ENCODE measurements at regions of chr3 and their contacts with region 1.

Region 1: DNA sequence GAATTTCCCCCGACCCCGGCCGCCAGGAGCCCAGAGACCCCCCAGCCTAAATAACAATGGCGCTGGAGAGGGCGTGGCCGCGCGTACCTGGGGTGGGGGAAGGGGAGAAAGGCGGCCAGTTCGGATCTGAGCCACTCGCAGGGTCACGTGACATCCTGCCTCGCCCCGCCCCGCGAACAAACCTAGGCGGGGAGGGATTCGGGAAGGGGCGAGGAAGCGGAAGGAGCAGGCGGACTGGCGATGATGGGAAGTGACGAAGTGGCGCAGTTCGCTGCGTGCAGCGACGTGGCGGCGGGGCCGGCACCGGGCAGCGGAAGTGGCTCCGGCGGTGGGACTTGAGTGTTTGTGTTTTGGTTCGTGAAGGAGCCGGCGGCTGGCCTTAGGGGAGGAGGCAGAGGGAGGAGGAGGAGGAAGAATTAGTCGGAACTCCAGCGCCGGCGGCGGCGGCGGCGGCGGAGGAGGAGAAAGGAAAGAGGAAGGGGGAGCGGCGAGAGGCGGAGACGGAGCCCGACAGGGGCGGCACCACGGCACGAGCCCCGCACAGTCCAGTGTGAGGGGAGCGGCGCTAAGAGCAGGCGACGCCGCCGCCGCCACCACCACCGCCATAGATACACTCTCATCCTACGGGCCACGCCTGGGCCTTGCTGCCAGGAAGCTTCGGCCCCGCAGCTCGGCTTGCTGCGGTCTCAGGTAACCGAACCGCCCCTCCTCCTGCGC is at the start of gene RAB5A:
- DNase-seq: peak; percentile 94
- ATAC-seq: peak; percentile 94
- H3K4me3 ChIP-seq: peak within 1 kb of the TSS; percentile 73 to 98 (median 90)
- H3K27ac ChIP-seq: peak within 1 kb of the TSS; percentile 88
- H3K4me1 ChIP-seq: peaks cover 29% of the 10 kb centered on the region
- H3K27me3 ChIP-seq: no peaks in the 10 kb centered on the region; a peak in 1 of 5 replicates
- CTCF ChIP-seq: no peak
- EP300 ChIP-seq: 0 out of 4 replicates have a peak, but pooled peaks have one; percentile 27 to 35
- POLR2A ChIP-seq: peak; percentile 59 to 91
- RAD21 ChIP-seq: peak; percentile 8; the same call in 1 of the 2 replicates
- total RNA-seq, gene RAB5A: 27.1 and 29.3 TPM in 2 replicates

Region 2: DNA sequence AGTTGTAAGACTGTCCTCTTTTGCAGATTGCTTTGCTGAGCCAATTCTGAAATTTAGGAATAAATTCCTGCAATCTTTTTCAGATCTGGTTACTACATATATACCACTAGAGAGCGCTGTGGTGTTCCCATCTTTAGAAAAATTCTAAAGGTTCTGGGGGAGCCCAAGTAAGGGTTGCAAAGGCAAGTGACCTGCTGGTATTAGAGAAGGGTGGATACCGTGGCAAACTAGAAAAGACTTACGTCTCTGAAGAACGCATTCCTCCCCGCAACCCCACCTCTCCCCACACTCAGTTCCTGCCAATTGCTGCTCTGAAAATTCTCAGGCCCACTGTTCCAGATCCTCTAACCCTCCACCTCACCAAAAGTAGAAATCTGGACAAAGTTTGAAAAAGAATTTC is 61.5 kb before region 1 on chr3:
- CTCF ChIA-PET with region 1: no interaction called
- POLR2A ChIA-PET with region 1: no interaction called
- in situ Hi-C with region 1: no loop called
- intact Hi-C with region 1: loop called (anchors 2 kb)
- DNase-seq: peak; percentile 30
- ATAC-seq: peak; percentile 67
- H3K4me3 ChIP-seq: no peak overlapping the region
- H3K27ac ChIP-seq: no peak overlapping the region
- H3K4me1 ChIP-seq: peaks cover 15% of the 10 kb centered on the region; the same call in 1 of the 2 replicates
- H3K27me3 ChIP-seq: no peaks in the 10 kb centered on the region
- CTCF ChIP-seq: peak; percentile 56
- EP300 ChIP-seq: no peak
- POLR2A ChIP-seq: no peak
- RAD21 ChIP-seq: no peak

Region 3: DNA sequence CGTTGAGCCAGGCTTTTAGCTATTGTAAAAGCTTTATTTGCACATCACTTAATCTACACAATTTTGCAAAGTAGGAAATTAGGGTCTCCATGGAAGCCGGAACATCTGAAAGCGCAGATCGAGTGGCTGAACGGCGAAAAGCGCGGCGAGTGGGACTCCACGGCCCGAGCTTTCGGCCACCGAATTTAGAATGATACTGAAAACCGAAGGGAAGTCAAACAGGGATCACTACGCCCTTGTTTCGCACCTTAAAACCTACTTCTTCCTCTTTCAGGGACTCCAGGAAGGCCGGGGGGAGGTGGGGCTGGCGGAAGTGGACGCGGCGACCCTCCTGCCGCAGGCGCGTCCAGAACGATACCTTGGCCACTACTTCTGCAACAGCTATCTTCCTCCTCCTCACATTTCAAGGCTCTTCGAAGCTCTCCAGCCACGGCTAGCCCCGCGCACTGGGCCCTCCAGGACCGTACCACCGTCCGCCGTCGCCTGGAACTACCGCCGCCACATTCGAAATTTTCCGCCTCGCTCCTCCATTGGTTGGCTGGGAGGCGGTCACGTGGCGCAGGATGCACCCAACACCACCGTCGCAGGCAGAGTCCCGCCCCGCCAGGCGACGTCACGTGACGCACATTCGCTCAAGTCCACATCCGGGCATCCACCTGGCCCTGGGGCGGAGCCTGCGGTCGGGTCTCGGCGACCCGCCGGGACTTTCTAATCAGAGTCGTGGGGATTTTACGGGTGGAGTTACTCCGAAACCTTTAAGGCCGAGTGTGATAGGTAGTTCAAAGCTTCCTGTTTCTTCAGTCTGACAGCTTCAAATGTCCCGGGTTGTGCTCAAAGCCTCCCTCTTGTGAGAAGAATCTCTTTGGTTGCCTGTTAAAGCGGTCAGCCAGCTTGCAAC is 239.0 kb after region 1 on chr3 and contains the start of gene SGO1:
- CTCF ChIA-PET with region 1: no interaction called
- POLR2A ChIA-PET with region 1: no interaction called
- in situ Hi-C with region 1: no loop called
- intact Hi-C with region 1: loop called (anchors 10 kb)
- DNase-seq: peak; percentile 94
- ATAC-seq: peak; percentile 98
- H3K4me3 ChIP-seq: peak within 1 kb of the TSS; percentile 91 to 99 (median 93)
- H3K27ac ChIP-seq: peak within 1 kb of the TSS; percentile 91
- H3K4me1 ChIP-seq: peaks cover 21% of the 10 kb centered on the region
- H3K27me3 ChIP-seq: no peaks in the 10 kb centered on the region; a peak in 1 of 5 replicates
- CTCF ChIP-seq: 0 out of 2 replicates have a peak, but pooled peaks have one; percentile 6
- EP300 ChIP-seq: no peak
- POLR2A ChIP-seq: peak; percentile 77 to 88
- RAD21 ChIP-seq: no peak
- total RNA-seq, gene SGO1: 16.1 and 23.8 TPM in 2 replicates

Region 4: GRCh38 chr3:20324714-20325478 is 377.9 kb after region 1 on chr3:
- CTCF ChIA-PET with region 1: no interaction called
- POLR2A ChIA-PET with region 1: no interaction called
- in situ Hi-C with region 1: no loop called
- intact Hi-C with region 1: loop called (anchors 5 kb)
- DNase-seq: no peak
- ATAC-seq: no peak
- H3K4me3 ChIP-seq: no peak overlapping the region
- H3K27ac ChIP-seq: no peak overlapping the region
- H3K4me1 ChIP-seq: peaks cover 47% of the 10 kb centered on the region
- H3K27me3 ChIP-seq: no peaks in the 10 kb centered on the region
- CTCF ChIP-seq: no peak
- EP300 ChIP-seq: no peak
- POLR2A ChIP-seq: no peak
- RAD21 ChIP-seq: no peak

Region 5: GRCh38 chr3:21188459-21188858 is 1241.5 kb after region 1 on chr3:
- CTCF ChIA-PET with region 1: no interaction called
- POLR2A ChIA-PET with region 1: no interaction called
- in situ Hi-C with region 1: no loop called
- intact Hi-C with region 1: no loop called
- DNase-seq: no peak
- ATAC-seq: no peak
- H3K4me3 ChIP-seq: no peak overlapping the region
- H3K27ac ChIP-seq: no peak overlapping the region
- H3K4me1 ChIP-seq: no peaks in the 10 kb centered on the region
- H3K27me3 ChIP-seq: no peaks in the 10 kb centered on the region
- CTCF ChIP-seq: no peak
- EP300 ChIP-seq: no peak
- POLR2A ChIP-seq: no peak
- RAD21 ChIP-seq: no peak